Caco-2 (cell line): ENCODE measurements at regions of chr4 and their contacts with region 1.

Region 1: GRCh38 chr4:81651243-81651899 is 179.7 kb upstream of the RASGEF1B start:
- DNase-seq: peak; percentile 19 to 46
- H3K4me3 ChIP-seq: no peak overlapping the region
- H3K4me3 Mint-ChIP-seq: no peak overlapping the region
- H3K27ac Mint-ChIP-seq: peak overlapping the region; percentile 75
- H3K4me1 ChIP-seq: peaks cover 28% of the 10 kb centered on the region
- H3K4me1 Mint-ChIP-seq: peaks cover 27% of the 10 kb centered on the region
- H3K27me3 ChIP-seq: no peaks in the 10 kb centered on the region
- H3K27me3 Mint-ChIP-seq: no peaks in the 10 kb centered on the region
- CTCF ChIP-seq: no peak

Region 2: GRCh38 chr4:81096566-81096965 is 554.8 kb before region 1 on chr4:
- CTCF ChIA-PET with region 1: no interaction called
- POLR2A ChIA-PET with region 1: no interaction called
- intact Hi-C with region 1: no loop called
- DNase-seq: no peak
- H3K4me3 ChIP-seq: no peak overlapping the region
- H3K4me3 Mint-ChIP-seq: no peak overlapping the region
- H3K27ac Mint-ChIP-seq: no peak overlapping the region
- H3K4me1 ChIP-seq: no peaks in the 10 kb centered on the region
- H3K4me1 Mint-ChIP-seq: no peaks in the 10 kb centered on the region
- H3K27me3 ChIP-seq: no peaks in the 10 kb centered on the region
- H3K27me3 Mint-ChIP-seq: no peaks in the 10 kb centered on the region
- CTCF ChIP-seq: no peak

Region 3: DNA sequence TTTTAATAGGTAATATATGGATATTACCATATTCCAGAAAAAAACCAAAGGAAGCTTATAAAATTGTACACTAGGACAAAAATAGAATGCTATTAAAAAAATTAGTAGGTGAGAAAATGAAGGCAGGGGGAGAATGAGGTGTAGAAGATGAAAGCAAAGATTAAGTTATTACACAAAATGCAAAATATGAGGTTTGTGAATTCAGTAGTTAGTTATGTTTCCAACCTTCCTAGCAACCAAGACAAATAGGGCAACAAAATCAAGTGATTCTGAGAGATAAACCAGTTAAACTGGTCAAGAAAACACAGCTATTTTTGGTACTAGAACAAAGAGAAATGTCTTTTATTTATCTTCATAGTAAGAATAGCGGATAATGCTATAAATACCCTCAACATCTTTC is 120.3 kb after region 1 on chr4:
- CTCF ChIA-PET with region 1: no interaction called
- POLR2A ChIA-PET with region 1: no interaction called
- intact Hi-C with region 1: loop called (anchors 5 kb)
- DNase-seq: no peak
- H3K4me3 ChIP-seq: no peak overlapping the region
- H3K4me3 Mint-ChIP-seq: no peak overlapping the region
- H3K27ac Mint-ChIP-seq: peak overlapping the region; percentile 94
- H3K4me1 ChIP-seq: peaks cover 27% of the 10 kb centered on the region
- H3K4me1 Mint-ChIP-seq: peaks cover 15% of the 10 kb centered on the region
- H3K27me3 ChIP-seq: no peaks in the 10 kb centered on the region
- H3K27me3 Mint-ChIP-seq: no peaks in the 10 kb centered on the region
- CTCF ChIP-seq: no peak